Natural killer cell (primary cell): ENCODE measurements at regions of chr6 and their contacts with region 1.

Region 1: DNA sequence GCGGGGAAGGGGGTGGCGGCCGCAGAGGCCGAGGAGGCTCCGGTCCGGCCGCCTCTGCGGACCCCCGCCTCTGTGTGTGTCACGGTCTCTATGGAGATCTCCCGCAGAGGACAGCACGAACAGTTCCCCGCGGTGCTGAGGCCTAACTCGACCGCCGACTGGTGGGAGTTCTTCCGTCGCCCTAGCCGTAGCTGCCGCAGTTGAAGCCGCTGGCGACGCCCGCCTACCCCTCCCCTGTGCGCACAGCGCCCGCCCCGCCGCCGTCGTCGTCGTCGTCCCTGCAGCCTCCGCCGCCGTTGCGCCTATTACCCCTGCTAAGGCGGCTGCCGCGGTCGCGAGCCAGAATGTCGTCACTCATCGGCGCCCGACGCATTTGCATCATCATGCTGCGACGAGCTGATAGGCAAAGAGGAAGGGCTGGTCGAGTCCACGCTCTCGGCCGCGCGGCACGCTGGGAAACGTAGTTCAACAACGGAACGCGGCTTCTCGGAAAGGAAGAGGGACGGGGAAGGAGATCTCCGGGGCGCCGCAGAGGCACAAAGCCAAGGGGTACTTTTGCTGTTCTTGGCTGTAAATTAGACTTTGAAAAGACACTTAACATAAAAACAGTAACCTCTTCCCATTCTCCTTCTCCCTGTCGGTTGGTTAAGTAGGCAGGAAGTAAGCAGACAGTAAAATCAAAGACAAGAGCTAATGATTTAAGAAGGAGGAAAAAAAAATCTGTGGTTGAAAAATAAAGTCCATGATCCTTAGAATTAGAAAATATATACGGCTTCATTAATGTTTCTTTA is at the start of gene NUP153:
- DNase-seq: peak; percentile 100
- ATAC-seq: peak; percentile 70 to 87 (median 75)
- H3K4me3 ChIP-seq: peak within 1 kb of the TSS; percentile 98
- H3K4me3 Mint-ChIP-seq: peak within 1 kb of the TSS; percentile 89
- H3K27ac ChIP-seq: peak within 1 kb of the TSS; percentile 100
- H3K27ac Mint-ChIP-seq: peak within 1 kb of the TSS; percentile 95 to 98
- H3K4me1 ChIP-seq: peaks cover 35% of the 10 kb centered on the region
- H3K4me1 Mint-ChIP-seq: peaks cover 39 to 40% of the 10 kb centered on the region in 2 donors
- H3K27me3 ChIP-seq: no peaks in the 10 kb centered on the region
- H3K27me3 Mint-ChIP-seq: no peaks in the 10 kb centered on the region
- CTCF ChIP-seq: no peak
- total RNA-seq, gene NUP153: 67.5 to 74.9 (median 68.0) TPM

Region 2: DNA sequence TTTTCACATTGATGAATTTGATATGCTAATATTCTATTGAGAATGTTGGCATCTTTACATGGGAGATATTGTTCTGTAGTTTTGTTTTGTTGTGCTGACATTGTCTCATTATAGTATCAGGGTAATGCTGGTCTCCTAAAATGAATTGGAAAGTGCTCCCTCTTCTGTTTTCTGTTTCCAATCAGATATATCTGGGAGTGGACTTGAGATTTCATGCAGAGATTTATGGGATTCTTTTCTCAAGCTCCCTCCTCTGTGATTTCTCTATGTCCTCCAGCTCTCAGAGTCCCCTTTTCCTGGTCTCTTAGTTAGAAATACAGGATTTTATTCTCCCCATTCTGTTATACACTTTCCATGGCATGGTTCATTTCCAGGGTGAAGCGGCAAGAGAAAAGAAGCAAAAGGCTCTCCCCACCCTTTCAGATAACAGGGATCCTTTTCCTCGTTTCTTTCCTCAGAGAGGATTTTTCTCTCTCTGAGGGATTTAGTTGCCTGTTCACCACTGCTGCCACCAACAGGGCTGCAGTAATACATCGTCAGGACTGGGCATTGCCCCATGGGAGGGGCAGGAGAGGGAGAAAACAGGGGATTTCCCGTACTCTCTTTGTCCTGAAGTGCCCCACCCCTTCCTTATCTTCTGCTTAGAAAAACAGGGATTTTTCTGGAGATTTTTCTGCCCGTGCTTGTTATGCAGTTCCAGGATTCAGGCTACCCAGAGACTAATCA is 664.2 kb before region 1 on chr6:
- intact Hi-C with region 1: no loop called
- DNase-seq: no peak
- ATAC-seq: no peak
- H3K4me3 ChIP-seq: no peak overlapping the region
- H3K4me3 Mint-ChIP-seq: no peak overlapping the region
- H3K27ac ChIP-seq: no peak overlapping the region
- H3K27ac Mint-ChIP-seq: no peak overlapping the region
- H3K4me1 ChIP-seq: no peaks in the 10 kb centered on the region
- H3K4me1 Mint-ChIP-seq: no peaks in the 10 kb centered on the region
- H3K27me3 ChIP-seq: peaks cover 7% of the 10 kb centered on the region
- H3K27me3 Mint-ChIP-seq: peaks cover 19 to 60% of the 10 kb centered on the region in 2 donors
- CTCF ChIP-seq: no peak

Region 3: DNA sequence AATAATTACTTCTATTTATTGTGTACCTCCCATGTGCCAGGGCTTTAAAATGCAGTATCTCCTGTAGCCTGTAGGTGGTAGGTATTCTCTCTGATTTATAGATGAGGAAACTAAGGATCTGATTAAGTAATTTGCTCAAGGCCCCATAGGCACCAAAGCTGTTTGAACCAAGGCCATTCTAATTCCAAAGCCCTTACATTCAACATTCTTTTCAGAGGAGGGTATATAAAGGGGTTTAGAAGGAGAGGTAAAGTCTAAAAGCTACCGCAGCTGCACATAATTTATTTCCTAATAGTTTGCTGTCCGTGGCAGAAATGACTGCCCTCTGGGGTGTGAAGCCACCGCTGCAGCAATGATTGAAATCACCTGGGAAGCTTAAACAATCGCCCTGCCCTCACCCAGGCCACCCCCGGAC is 201.7 kb before region 1 on chr6:
- intact Hi-C with region 1: no loop called
- DNase-seq: peak in 1 of 2 donors; percentile 9
- ATAC-seq: peak in 2 of 3 donors; percentile 40 to 52
- H3K4me3 ChIP-seq: no peak overlapping the region
- H3K4me3 Mint-ChIP-seq: no peak overlapping the region
- H3K27ac ChIP-seq: no peak overlapping the region
- H3K27ac Mint-ChIP-seq: no peak overlapping the region
- H3K4me1 ChIP-seq: no peaks in the 10 kb centered on the region
- H3K4me1 Mint-ChIP-seq: no peaks in the 10 kb centered on the region
- H3K27me3 ChIP-seq: no peaks in the 10 kb centered on the region
- H3K27me3 Mint-ChIP-seq: peaks cover 8% of the 10 kb centered on the region in 2 donors
- CTCF ChIP-seq: no peak

Region 4: GRCh38 chr6:17633465-17634188 is 73.1 kb before region 1 on chr6:
- intact Hi-C with region 1: loop called (anchors 1 kb)
- DNase-seq: peak; percentile 24 to 63
- ATAC-seq: peak; percentile 86 to 91 (median 88)
- H3K4me3 ChIP-seq: no peak overlapping the region
- H3K4me3 Mint-ChIP-seq: peak overlapping the region; percentile 72
- H3K27ac ChIP-seq: peak overlapping the region; percentile 58
- H3K27ac Mint-ChIP-seq: peak overlapping the region; percentile 74 to 86
- H3K4me1 ChIP-seq: peaks cover 31% of the 10 kb centered on the region
- H3K4me1 Mint-ChIP-seq: peaks cover 56 to 57% of the 10 kb centered on the region in 2 donors
- H3K27me3 ChIP-seq: no peaks in the 10 kb centered on the region
- H3K27me3 Mint-ChIP-seq: no peaks in the 10 kb centered on the region
- CTCF ChIP-seq: no peak

Region 5: DNA sequence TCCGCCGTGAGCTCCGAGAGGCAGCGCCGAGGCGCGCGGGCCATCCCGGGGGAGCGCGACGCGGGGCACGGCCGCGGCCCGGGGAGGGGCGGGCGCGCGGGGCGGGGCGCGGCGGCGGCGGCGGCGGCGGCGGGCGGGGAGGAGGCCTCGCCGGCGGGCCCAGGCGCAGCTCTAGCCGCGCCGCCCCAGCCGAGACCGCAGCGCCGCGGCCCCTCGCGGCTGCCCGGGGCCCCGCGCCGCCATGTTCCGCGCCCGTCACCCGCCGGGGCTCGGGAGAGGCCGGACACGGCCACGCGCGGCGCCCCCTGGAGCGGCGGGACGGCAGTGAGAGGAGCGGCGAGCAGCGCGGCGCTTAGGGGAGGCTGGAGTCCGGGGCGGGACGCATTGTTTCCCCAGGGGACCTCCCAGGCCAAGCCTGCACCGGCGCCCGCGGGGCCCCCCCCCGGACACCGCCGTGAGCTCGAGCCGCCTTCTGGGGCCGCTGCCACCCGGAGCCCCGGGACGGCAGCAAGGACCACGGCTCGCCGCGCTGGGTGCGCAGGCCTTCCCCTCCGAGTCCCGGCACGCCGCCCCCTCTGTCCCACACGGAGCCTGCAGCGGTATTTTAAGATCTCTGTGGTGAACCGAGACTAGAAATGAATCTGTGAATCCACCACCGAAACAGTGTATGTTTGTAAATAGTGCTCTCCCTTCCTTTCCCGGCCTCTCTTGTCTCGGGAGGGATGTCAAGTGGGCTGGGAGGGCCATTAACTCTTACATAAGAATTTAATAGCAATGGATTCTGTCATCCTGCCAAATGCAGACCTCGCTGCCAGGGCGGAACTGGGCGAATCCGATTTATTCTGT is 281.0 kb after region 1 on chr6 and contains the start of gene KIF13A:
- intact Hi-C with region 1: loop called (anchors 10 kb)
- DNase-seq: peak; percentile 36 to 60
- ATAC-seq: peak; percentile 72 to 80 (median 78)
- H3K4me3 ChIP-seq: peak within 1 kb of the TSS; percentile 41
- H3K4me3 Mint-ChIP-seq: peak within 1 kb of the TSS; percentile 95
- H3K27ac ChIP-seq: peak within 1 kb of the TSS; percentile 37
- H3K27ac Mint-ChIP-seq: peak within 1 kb of the TSS; percentile 60 to 86
- H3K4me1 ChIP-seq: peaks cover 18% of the 10 kb centered on the region
- H3K4me1 Mint-ChIP-seq: peaks cover 23 to 44% of the 10 kb centered on the region in 2 donors
- H3K27me3 ChIP-seq: no peaks in the 10 kb centered on the region
- H3K27me3 Mint-ChIP-seq: peaks cover 0 to 9% of the 10 kb centered on the region in 2 donors
- CTCF ChIP-seq: peak; percentile 22
- total RNA-seq, gene KIF13A: 15.0 to 26.4 (median 19.5) TPM

Region 6: GRCh38 chr6:18155150-18155863 is 448.5 kb after region 1 on chr6 and contains the start of gene KDM1B:
- intact Hi-C with region 1: loop called (anchors 1 kb)
- DNase-seq: peak; percentile 98 to 99
- ATAC-seq: peak; percentile 89 to 98 (median 91)
- H3K4me3 ChIP-seq: peak within 1 kb of the TSS; percentile 99
- H3K4me3 Mint-ChIP-seq: peak within 1 kb of the TSS; percentile 97
- H3K27ac ChIP-seq: peak within 1 kb of the TSS; percentile 95
- H3K27ac Mint-ChIP-seq: peak within 1 kb of the TSS; percentile 93 to 99
- H3K4me1 ChIP-seq: peaks cover 28% of the 10 kb centered on the region
- H3K4me1 Mint-ChIP-seq: peaks cover 26 to 34% of the 10 kb centered on the region in 2 donors
- H3K27me3 ChIP-seq: no peaks in the 10 kb centered on the region
- H3K27me3 Mint-ChIP-seq: no peaks in the 10 kb centered on the region
- CTCF ChIP-seq: no peak
- total RNA-seq, gene KDM1B: 12.7 to 13.3 (median 13.0) TPM